Heart left ventricle (tissue), 16 donors: ENCODE measurements at regions of chr12 and their contacts with region 1.

Region 1: GRCh38 chr12:51419425-51420208 is 5.0 kb upstream of the SLC4A8 start:
- DNase-seq: no peak
- ATAC-seq: no peak
- H3K4me3 ChIP-seq: no peak overlapping the region
- H3K27ac ChIP-seq: no peak overlapping the region
- H3K4me1 ChIP-seq: peaks cover 0 to 6% (median 4%) of the 10 kb centered on the region in 12 donors
- H3K27me3 ChIP-seq: peaks cover 0 to 23% (median 3%) of the 10 kb centered on the region in 9 donors
- CTCF ChIP-seq: no peak
- POLR2A ChIP-seq: no peak

Region 2: DNA sequence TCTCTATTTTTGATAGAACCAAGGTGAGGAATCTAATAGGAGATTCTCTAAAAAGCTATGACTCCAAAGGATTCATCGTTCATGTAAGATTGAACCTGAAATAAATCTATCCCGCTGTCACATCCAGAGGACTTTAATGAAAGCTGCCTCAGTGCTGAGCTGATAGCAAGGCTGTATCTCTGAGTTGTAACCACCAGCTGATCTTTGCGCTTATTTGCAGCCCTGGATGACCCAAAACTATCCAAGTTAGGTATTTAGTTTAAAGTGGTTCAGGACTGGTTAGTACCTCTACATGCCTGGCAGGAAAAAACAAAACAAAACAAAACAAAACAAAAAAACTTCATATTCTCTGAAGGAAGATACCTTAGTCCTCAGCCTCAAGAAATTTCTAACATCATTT is 459.5 kb after region 1 on chr12:
- intact Hi-C with region 1: loop called (anchors 2 to 10 kb)
- DNase-seq: no peak
- ATAC-seq: no peak
- H3K4me3 ChIP-seq: no peak overlapping the region
- H3K27ac ChIP-seq: no peak overlapping the region
- H3K4me1 ChIP-seq: no peaks in the 10 kb centered on the region
- H3K27me3 ChIP-seq: no peaks in the 10 kb centered on the region
- CTCF ChIP-seq: no peak
- POLR2A ChIP-seq: no peak